ENCODE measurements at regions of chr5 and their contacts with region 1.

Region 1: GRCh38 chr5:137660349-137660817 is 75.5 kb downstream of the KLHL3 start:
- DNase-seq: peak; percentile 67
- CTCF ChIP-seq: peak; percentile 77

Region 2: DNA sequence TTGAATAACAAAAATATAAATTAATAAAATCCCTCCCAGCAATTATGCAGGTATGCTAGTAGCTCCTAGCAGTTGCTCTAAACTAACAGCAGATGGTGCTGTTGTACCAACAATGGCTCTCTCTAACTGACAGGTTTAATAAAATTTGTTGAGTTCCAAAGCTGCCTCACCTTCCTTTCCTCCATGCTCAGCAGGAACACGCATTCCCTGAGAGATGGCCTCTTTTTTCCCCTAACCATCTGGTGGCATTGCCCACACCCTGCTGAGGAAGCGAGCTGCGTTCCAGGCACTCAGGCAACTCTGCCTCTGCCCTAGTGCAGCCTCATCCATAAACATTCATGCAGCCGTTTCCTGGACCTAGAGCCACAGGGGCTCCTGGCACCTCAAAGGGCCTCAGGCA is 30.7 kb before region 1 on chr5:
- CTCF ChIA-PET with region 1: interaction called, 31 read pairs
- POLR2A ChIA-PET with region 1: no interaction called
- DNase-seq: peak; percentile 82
- CTCF ChIP-seq: peak; percentile 72

Region 3: DNA sequence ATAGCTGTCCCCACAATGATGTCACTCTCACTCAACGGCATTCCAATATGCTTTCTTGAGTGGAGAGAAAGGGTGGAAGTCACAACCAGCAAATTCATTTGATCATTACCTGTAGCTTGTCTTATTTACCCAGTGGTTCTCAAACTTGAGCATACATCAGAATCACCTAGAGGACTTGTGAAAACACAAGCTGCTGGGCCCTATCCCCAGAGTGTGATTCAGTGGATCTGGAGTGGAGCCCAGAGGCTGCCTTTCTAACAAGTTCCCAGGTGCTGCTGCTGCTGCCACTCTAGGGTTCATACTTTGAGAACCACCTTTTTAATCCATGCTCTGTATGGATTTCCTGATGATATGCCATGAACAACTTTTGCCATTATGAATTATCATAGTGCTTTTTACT is 19.2 kb before region 1 on chr5:
- CTCF ChIA-PET with region 1: interaction called, 23 read pairs
- POLR2A ChIA-PET with region 1: no interaction called
- DNase-seq: no peak
- CTCF ChIP-seq: no peak

Region 4: GRCh38 chr5:137672019-137672418 is 11.6 kb after region 1 on chr5:
- CTCF ChIA-PET with region 1: interaction called, 64 read pairs
- POLR2A ChIA-PET with region 1: no interaction called
- DNase-seq: no peak
- CTCF ChIP-seq: no peak

Region 5: DNA sequence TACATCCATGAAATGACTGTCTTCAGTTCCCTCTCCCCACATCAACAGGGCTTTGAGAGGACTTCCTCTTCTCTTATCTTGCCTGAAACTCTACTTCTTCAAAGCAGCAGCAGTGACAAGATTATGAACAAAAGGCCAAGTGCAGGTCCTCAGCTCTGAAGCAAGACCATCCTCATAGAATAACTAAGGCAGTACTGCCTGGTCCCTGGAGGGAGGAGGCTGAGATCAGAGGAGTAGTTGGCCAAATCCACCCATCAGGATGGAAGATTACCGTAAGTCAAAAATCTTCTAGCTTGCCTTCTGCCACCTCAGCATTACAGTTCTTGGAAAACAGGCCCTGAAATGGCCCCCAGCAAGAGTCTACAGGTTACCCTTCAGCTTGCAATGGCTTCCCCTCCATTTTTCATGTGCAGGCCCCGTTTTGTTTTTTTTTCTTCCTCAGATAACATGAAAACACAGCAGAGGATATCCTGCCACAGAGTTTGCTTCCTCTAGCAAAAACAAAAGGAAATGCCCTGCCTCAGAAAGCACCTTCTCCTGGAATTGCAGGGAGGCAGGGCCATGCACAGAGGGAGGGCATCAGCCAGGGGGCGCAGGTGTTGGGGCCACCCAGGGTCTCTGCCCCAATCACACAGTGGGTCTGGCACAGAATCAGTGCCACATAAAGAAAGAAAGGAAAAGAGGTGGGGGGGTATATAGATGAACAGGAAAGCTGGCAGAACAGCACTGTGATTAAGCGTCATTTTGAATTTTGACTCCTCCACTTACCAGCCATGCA is 35.5 kb after region 1 on chr5:
- CTCF ChIA-PET with region 1: interaction called, 10 read pairs
- POLR2A ChIA-PET with region 1: no interaction called
- DNase-seq: peak; percentile 35
- CTCF ChIP-seq: peak; percentile 6

Region 6: GRCh38 chr5:137730336-137730735 is 70.0 kb after region 1 on chr5:
- CTCF ChIA-PET with region 1: interaction called, 292 read pairs
- POLR2A ChIA-PET with region 1: no interaction called
- DNase-seq: no peak
- CTCF ChIP-seq: no peak

Region 7: GRCh38 chr5:137754126-137754960 is 94.0 kb after region 1 on chr5 and contains the start of gene HNRNPA0:
- CTCF ChIA-PET with region 1: interaction called, 14 read pairs
- POLR2A ChIA-PET with region 1: interaction called, 3 read pairs
- DNase-seq: peak; percentile 96
- CTCF ChIP-seq: no peak

Region 8: DNA sequence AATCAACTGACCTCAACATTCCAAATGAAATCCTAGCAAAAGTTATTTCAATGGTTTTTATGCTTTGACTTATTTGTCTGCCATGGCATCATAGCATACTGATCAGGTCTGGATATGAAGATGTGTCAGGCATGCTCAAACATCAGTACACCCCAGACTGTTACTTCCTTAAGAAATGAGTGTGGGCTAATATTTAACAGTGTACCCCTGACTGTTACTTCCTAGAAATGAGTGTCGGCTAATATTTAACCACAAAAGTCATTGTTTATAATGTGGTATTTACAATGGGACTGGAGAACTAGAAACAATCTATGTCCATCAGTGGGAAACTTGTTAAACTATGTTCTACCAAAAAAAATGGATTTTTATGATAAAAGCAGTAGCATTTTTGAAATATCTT is 131.9 kb after region 1 on chr5:
- CTCF ChIA-PET with region 1: no interaction called
- POLR2A ChIA-PET with region 1: no interaction called
- DNase-seq: no peak
- CTCF ChIP-seq: no peak